Endothelial cell of umbilical vein (primary cell): ENCODE measurements at regions of chr13 and their contacts with region 1.

Region 1: GRCh38 chr13:42110410-42111155 is 62.1 kb downstream of the DGKH start:
- DNase-seq: peak; percentile 84
- H3K4me3 ChIP-seq: no peak overlapping the region
- H3K27ac ChIP-seq: no peak overlapping the region
- H3K4me1 ChIP-seq: no peaks in the 10 kb centered on the region
- H3K27me3 ChIP-seq: no peaks in the 10 kb centered on the region
- CTCF ChIP-seq: peak; percentile 38 to 52
- POLR2A ChIP-seq: no peak

Region 2: GRCh38 chr13:41352935-41353840 is 757.4 kb before region 1 on chr13:
- CTCF ChIA-PET with region 1: no interaction called
- POLR2A ChIA-PET with region 1: no interaction called
- dilution Hi-C with region 1: no loop called
- intact Hi-C with region 1: loop called (anchors 2 kb)
- DNase-seq: peak; percentile 87
- H3K4me3 ChIP-seq: no peak overlapping the region
- H3K27ac ChIP-seq: peak overlapping the region; percentile 72
- H3K4me1 ChIP-seq: peaks cover 12% of the 10 kb centered on the region
- H3K27me3 ChIP-seq: no peaks in the 10 kb centered on the region
- CTCF ChIP-seq: peak; percentile 59 to 69
- POLR2A ChIP-seq: no peak

Region 3: DNA sequence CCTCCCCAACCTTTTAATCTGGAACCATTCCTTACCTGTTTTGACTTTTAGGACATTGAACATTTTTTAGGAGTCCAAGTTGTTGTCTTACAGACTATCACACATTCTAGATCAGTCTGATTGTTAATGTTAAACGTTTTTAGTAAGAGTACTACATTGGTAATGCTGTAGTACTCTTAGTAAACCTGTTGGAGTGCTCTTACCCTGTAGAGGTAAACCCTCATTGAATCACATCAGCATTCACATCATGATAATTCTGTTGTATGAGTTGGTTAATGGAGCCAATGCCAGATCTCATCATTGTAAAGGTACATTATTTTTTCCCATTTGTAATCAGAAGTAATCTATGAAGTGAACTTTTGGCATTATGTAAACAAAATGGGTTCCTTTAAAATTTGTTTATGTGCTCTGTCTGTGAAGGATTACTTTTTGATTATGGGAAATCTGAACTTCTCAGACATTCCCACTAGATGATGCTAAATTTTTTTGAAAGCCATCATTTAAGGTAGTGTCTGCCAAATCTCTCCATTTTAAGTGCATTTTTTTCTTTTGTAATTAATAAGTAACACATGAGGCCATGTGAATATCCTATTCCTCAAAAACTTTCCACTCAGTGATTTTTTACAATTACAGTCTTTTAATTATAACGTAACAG is 204.9 kb before region 1 on chr13:
- CTCF ChIA-PET with region 1: interaction called, 3 read pairs
- POLR2A ChIA-PET with region 1: no interaction called
- dilution Hi-C with region 1: no loop called
- intact Hi-C with region 1: loop called (anchors 1 kb)
- DNase-seq: peak; percentile 33
- H3K4me3 ChIP-seq: no peak overlapping the region
- H3K27ac ChIP-seq: no peak overlapping the region
- H3K4me1 ChIP-seq: no peaks in the 10 kb centered on the region
- H3K27me3 ChIP-seq: no peaks in the 10 kb centered on the region
- CTCF ChIP-seq: peak in 1 of 2 donors; percentile 26
- POLR2A ChIP-seq: no peak